WTC11 (cell line): ENCODE measurements at regions of chr15 and their contacts with region 1.

Region 1: DNA sequence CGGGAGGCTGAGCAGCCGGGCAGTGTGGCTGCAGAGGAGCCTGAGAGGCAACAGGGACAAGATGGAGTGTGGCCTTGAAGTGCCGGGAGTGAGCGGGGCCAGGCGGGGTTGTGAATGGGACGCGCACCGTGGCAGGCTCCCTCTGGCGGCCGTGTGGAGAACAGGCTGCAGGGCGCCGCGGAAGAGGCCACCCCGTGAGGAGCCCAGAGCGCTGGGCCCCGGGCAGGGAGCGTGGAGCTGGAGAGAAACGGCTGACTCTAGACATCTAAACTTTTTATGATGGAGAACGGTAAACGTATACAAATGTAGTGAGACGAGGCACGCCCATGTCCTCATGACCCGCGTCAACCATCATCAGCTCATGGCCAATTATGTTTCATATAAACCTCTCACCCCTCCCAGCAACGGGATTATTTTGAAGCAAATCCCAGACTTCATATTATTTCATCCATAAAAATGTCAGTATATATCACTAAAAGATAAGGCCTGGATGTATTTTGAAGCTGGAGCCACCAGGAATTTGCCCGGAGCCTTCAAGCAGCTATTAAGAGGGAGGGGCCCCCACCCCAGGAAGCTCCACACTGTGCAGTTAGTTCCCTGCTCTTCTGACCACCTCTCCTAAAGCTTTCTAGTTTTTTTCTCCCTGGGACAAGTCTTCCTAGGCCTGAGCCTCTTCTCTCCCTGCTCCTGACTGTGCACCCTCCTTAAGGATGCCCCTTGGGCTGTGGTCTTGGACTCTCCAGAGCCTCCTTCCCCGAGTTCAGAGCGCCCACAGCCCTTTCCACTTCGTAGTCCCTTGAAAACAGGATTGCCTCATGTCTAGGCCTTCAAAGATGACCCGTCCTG is 149.4 kb downstream of the SMAD6 start:
- DNase-seq: peak; percentile 86
- ATAC-seq: peak; percentile 86
- H3K4me3 Mint-ChIP-seq: no peak overlapping the region
- H3K27ac Mint-ChIP-seq: no peak overlapping the region
- H3K4me1 Mint-ChIP-seq: peaks cover 20% of the 10 kb centered on the region
- H3K27me3 Mint-ChIP-seq: peaks cover 16% of the 10 kb centered on the region
- CTCF ChIP-seq: peak; percentile 93

Region 2: DNA sequence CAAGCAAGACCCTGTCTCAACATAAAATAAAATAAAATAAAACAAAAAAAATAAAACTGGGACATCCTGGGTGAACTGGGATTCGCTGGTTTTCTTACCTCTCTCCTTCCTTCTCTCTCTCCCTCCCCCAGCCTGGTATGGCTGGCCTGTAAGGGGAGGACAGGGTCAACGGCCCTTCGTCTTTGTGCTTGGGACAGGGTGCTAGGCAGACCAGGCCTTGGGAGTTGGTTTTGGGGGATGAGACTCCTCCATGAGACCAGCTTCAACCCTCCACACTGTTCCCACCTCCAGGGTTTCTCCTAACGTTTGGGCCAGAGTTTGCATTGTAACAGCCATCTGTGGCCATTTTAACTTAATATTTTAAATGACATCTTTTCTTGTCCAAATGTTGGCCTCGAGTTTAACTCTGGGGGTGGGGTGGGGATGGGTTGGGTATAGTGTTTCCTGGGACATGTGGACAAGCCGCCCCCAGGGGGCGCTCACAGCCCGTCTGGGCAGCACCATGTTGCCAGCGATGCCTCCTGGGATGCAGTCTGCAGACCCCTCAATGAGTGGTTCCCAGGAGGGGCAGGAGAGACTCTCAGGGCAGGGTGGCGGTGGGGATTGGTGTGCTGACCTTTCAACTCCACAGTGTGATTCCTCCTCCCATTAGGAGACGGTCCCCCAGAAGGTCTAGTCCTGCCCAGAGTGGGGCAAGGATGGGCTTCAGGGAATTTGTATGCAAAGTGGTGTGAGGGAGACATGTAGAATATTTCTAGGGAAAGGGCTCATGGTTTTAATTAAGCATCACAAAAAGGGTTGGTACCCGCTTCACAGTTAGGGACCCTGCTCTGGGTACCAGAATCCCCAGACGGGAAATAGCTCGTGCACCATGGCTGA is 247.9 kb before region 1 on chr15:
- CTCF ChIA-PET with region 1: interaction called, 16 read pairs
- POLR2A ChIA-PET with region 1: no interaction called
- DNase-seq: peak; percentile 82
- ATAC-seq: peak; percentile 95
- H3K4me3 Mint-ChIP-seq: no peak overlapping the region
- H3K27ac Mint-ChIP-seq: no peak overlapping the region; the same call in 1 of the 2 replicates
- H3K4me1 Mint-ChIP-seq: no peaks in the 10 kb centered on the region
- H3K27me3 Mint-ChIP-seq: no peaks in the 10 kb centered on the region
- CTCF ChIP-seq: peak; percentile 95

Region 3: GRCh38 chr15:66700802-66701421 is 150.5 kb before region 1 on chr15:
- CTCF ChIA-PET with region 1: interaction called, 69 read pairs
- POLR2A ChIA-PET with region 1: no interaction called
- DNase-seq: peak; percentile 93
- ATAC-seq: peak; percentile 55
- H3K4me3 Mint-ChIP-seq: peak overlapping the region; percentile 90
- H3K27ac Mint-ChIP-seq: 0 out of 2 replicates have a peak overlapping the region, but pooled peaks have one; percentile 12
- H3K4me1 Mint-ChIP-seq: peaks cover 37% of the 10 kb centered on the region
- H3K27me3 Mint-ChIP-seq: peaks cover 28% of the 10 kb centered on the region
- CTCF ChIP-seq: no peak

Region 4: GRCh38 chr15:66774001-66774814 is 77.2 kb before region 1 on chr15:
- CTCF ChIA-PET with region 1: interaction called, 55 read pairs
- POLR2A ChIA-PET with region 1: interaction called, 3 read pairs
- DNase-seq: peak; percentile 92
- ATAC-seq: peak; percentile 86
- H3K4me3 Mint-ChIP-seq: no peak overlapping the region
- H3K27ac Mint-ChIP-seq: peak overlapping the region; percentile 83
- H3K4me1 Mint-ChIP-seq: peaks cover 47% of the 10 kb centered on the region
- H3K27me3 Mint-ChIP-seq: no peaks in the 10 kb centered on the region
- CTCF ChIP-seq: peak; percentile 99

Region 5: DNA sequence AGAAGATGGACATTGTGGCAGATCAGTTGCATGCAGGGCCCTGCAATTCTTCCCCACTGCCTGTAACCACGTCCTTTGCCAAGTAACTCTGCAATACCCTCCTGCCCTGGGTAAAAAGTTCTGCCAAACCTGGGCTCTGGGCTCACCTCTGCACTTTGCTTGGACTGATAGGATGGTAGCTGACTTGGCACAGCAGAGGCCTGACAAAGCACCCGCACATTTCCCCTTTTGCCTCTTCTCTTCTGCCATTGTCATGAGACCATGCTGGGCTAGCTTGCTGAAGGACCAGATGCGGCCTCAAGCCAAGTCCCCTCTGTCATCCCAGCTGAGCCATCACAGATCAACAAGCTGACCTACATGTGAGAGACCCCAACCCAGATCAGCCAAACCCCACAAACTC is 27.0 kb before region 1 on chr15:
- CTCF ChIA-PET with region 1: interaction called, 17 read pairs
- POLR2A ChIA-PET with region 1: no interaction called
- DNase-seq: no peak
- ATAC-seq: no peak
- H3K4me3 Mint-ChIP-seq: no peak overlapping the region
- H3K27ac Mint-ChIP-seq: no peak overlapping the region
- H3K4me1 Mint-ChIP-seq: peaks cover 33% of the 10 kb centered on the region
- H3K27me3 Mint-ChIP-seq: peaks cover 7% of the 10 kb centered on the region
- CTCF ChIP-seq: no peak

Region 6: GRCh38 chr15:66966257-66966656 is 114.8 kb after region 1 on chr15:
- CTCF ChIA-PET with region 1: no interaction called
- POLR2A ChIA-PET with region 1: no interaction called
- DNase-seq: no peak
- ATAC-seq: no peak
- H3K4me3 Mint-ChIP-seq: no peak overlapping the region
- H3K27ac Mint-ChIP-seq: no peak overlapping the region
- H3K4me1 Mint-ChIP-seq: peaks cover 14% of the 10 kb centered on the region
- H3K27me3 Mint-ChIP-seq: no peaks in the 10 kb centered on the region; the same call in 1 of the 2 replicates
- CTCF ChIP-seq: no peak